Activated CD4-positive, alpha-beta T cell treated with anti-CD3 and anti-CD28 coated beads, Interleukin-2, amount 10 ng/mL, durations not matched to agents 24 days and 14 days (primary cell): ENCODE measurements at regions of chr3 and their contacts with region 1.

Region 1: DNA sequence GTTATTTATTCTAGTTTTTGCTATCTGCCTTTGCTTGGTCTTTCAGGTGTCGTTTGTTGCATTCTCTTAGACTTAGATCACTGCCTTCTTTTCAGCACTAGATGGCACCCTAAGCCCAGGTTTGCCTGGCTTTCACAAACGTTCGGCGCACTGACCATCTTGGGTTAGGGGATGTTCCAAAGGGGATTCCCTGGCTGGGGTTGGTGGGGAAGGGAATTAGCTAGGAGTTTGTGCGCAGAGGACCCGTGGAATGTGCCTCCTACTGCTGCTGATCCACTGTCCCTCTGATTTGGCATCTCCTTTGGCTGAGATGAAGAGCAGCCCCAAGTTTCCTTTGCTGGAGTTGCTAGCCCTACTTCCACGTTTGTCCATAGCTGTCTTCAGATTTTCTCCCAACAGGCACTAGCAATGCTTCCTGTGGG is 33.9 kb downstream of the PFN2 start:
- DNase-seq: peak; percentile 77
- H3K4me3 Mint-ChIP-seq: no peak overlapping the region
- H3K27ac Mint-ChIP-seq: no peak overlapping the region
- H3K4me1 Mint-ChIP-seq: peaks cover 18% of the 10 kb centered on the region
- H3K27me3 Mint-ChIP-seq: no peaks in the 10 kb centered on the region

Region 2: GRCh38 chr3:150220799-150221198 is 284.0 kb after region 1 on chr3:
- intact Hi-C with region 1: loop called (anchors 1 kb)
- DNase-seq: no peak
- H3K4me3 Mint-ChIP-seq: no peak overlapping the region
- H3K27ac Mint-ChIP-seq: no peak overlapping the region
- H3K4me1 Mint-ChIP-seq: peaks cover 2% of the 10 kb centered on the region
- H3K27me3 Mint-ChIP-seq: peaks cover 38% of the 10 kb centered on the region

Region 3: DNA sequence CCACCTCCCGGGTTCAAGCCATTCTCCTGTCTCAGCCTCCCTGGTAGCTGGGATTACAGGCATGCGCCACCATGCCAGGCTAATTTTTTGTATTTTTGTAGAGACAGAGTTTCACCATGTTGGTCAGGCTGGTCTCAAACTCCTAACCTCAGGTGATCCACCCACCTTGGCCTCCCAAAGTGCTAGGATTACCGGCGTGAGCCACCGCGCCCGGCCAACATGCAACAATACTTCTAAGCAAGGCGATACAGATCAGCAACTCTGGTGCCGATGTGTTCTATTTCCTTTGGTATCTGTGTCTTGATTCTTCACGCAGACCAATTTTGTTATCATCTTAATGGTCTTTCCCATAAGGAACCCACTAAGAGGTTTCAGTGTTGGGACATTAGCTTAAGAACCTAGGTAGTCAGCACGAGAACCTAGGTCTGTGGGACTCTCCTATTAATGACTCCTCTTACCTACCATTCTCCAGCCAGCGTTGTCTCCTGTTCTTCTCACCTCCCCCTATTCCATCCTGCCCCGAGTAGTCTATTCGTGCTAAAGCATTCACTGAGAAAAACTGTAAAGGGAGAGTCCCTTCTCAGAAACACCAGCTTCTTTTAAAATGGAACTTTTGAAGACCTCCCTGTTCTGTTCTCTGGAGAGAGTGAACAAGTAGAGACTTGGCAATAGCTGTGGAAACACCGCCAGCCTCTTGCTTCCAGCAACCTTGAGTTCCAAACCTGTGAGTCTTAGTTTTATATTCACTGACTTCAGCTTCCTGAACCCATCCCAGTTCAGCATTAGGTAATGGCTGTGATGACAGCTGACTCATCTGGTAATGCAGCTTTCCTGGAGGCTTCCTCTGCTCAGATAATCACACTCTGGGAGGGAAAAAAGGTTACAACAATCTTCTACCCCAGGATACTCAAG is 532.5 kb after region 1 on chr3:
- intact Hi-C with region 1: no loop called
- DNase-seq: no peak
- H3K4me3 Mint-ChIP-seq: no peak overlapping the region
- H3K27ac Mint-ChIP-seq: no peak overlapping the region
- H3K4me1 Mint-ChIP-seq: no peaks in the 10 kb centered on the region
- H3K27me3 Mint-ChIP-seq: no peaks in the 10 kb centered on the region